Right cardiac atrium (tissue), 5 donors: ENCODE measurements at regions of chr14 and their contacts with region 1.

Region 1: GRCh38 chr14:104650057-104650981 is 39.1 kb upstream of the INF2 start:
- DNase-seq: peak; percentile 66 to 90 (median 89)
- ATAC-seq: peak; percentile 80 to 86
- H3K4me3 ChIP-seq: peak overlapping the region; percentile 55
- H3K27ac ChIP-seq: no peak overlapping the region
- H3K4me1 ChIP-seq: no peaks in the 10 kb centered on the region
- H3K27me3 ChIP-seq: no peaks in the 10 kb centered on the region

Region 2: GRCh38 chr14:104016873-104017650 is 633.3 kb before region 1 on chr14:
- intact Hi-C with region 1: no loop called
- DNase-seq: no peak
- ATAC-seq: no peak
- H3K4me3 ChIP-seq: no peak overlapping the region
- H3K27ac ChIP-seq: no peak overlapping the region
- H3K4me1 ChIP-seq: no peaks in the 10 kb centered on the region
- H3K27me3 ChIP-seq: no peaks in the 10 kb centered on the region

Region 3: DNA sequence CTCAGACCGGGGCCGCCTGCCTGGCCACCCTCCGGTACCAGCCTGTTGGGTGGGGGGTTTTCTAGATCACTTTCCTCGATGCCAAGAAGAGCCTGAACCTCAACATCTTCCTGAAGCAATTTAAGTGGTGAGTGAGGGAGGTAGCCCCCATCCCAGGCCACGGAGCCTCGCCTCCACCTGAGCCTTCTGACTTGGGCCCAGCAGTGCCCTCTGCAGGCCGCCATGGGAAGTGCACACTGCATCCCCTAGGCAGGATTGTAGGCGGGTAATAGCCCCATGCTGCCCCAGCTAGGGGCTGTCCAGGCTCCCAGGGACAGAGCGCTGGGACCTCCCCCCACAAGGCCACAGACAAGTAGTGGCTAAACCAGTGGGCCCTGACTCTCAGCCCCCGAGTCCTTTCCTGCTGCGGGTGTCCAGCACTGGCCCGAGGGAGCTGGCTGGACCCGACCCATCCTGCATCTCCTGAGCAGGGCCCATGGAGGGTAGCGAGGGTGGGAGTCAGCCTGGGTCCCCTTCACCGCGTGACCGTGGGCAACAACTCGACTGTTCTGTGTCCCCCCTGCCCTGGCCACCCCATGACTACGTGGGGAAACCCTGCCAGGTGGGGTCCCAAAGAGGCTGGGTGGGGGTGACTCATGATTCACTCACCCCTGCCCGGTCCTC is 58.4 kb after region 1 on chr14:
- intact Hi-C with region 1: loop called (anchors 2 to 5 kb)
- DNase-seq: peak; percentile 67 to 90 (median 90)
- ATAC-seq: peak; percentile 45 to 64
- H3K4me3 ChIP-seq: no peak overlapping the region
- H3K27ac ChIP-seq: no peak overlapping the region
- H3K4me1 ChIP-seq: no peaks in the 10 kb centered on the region
- H3K27me3 ChIP-seq: no peaks in the 10 kb centered on the region